MCF 10A (cell line): ENCODE measurements at regions of chr3 and their contacts with region 1.

Region 1: DNA sequence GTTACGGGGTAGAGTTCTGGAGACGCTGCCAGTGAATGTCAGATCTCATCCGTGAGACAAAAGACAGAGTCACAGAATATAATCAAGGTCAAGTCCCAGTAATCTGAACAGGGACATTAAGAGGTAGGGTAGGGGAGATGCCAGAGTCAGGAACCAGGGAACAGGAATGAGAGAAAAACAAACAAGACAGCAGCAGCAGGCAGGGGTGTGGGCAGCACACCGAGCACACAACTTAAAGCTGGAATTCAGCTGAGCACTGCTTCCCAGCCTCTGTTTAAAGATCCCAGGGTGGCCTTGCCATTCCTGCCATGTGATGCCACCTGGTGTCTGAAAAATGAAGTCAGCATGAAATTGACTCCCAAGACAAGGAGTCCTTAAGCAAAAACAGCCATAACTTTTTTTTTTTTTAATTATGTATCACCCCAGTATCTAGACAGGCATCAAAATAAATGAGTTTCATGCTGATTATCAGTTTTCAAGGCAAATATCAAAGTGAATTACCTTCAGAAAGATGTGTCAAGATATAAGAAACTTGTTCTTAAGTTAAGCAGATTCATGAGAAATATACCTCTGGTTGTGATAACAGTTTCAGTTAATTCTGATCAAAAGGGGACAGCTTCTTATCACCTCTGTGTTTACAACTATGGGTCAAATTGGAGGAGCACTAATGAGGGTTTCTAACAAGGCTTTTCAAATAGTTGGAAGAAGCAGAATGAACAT is 203.7 kb downstream of the SLC9A9 start:
- DNase-seq: peak; percentile 85
- H3K4me3 Mint-ChIP-seq: no peak overlapping the region
- H3K27ac Mint-ChIP-seq: peak overlapping the region; percentile 81
- H3K4me1 Mint-ChIP-seq: peaks cover 6% of the 10 kb centered on the region
- H3K27me3 Mint-ChIP-seq: no peaks in the 10 kb centered on the region
- CTCF ChIP-seq: peak; percentile 69

Region 2: DNA sequence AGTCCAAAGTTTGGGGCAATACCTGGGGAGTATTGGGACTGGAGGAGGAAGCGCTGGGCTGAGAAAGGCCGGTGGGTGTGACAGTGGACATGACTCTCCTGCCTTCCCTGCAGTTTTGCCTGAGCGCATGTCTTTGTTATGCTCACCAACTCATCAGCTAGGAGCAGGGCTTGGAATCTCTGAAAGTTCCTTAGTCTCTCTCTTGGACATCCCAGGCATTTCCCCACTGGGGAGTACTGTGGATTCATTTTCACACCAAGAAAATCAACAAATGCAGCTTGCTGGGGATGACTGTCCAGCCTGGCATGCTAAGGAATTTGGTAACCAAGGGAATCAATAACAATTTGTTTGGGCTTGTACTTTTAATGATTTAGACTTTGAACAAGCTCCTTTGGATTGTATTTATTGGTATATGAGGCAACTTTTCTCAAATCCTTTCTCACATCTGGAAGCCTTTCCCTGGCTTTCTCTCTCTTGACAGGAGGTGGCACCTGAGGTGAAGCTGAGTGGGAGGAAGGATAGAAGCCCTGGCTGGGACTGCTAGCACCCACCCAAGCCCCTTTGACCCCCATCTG is 573.5 kb before region 1 on chr3:
- CTCF ChIA-PET with region 1: interaction called, 30 read pairs
- POLR2A ChIA-PET with region 1: interaction called, 4 read pairs
- intact Hi-C with region 1: loop called (anchors 2 kb)
- DNase-seq: no peak
- H3K4me3 Mint-ChIP-seq: no peak overlapping the region
- H3K27ac Mint-ChIP-seq: no peak overlapping the region
- H3K4me1 Mint-ChIP-seq: no peaks in the 10 kb centered on the region
- H3K27me3 Mint-ChIP-seq: no peaks in the 10 kb centered on the region
- CTCF ChIP-seq: no peak

Region 3: DNA sequence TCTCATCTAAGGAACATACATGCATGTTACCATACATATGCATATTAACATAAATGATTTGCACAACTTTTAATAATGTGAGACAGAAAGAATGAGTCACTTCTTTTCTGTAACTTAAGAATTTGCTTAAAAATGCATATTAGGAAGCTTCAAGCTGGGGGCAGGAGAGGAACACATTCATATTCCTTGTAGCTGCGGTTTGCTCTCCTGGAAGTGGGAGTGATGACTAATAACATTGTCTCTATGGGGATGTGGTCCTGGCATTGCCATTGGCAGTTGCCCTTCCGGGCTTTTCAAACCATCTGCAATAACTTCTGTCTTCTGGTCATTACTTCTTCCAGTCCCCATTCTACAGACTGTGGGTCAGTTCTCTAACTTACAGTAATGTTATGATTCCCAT is 509.4 kb before region 1 on chr3:
- CTCF ChIA-PET with region 1: interaction called, 6 read pairs
- POLR2A ChIA-PET with region 1: interaction called, 4 read pairs
- intact Hi-C with region 1: loop called (anchors 1 kb)
- DNase-seq: peak; percentile 95
- H3K4me3 Mint-ChIP-seq: no peak overlapping the region
- H3K27ac Mint-ChIP-seq: no peak overlapping the region
- H3K4me1 Mint-ChIP-seq: peaks cover 13% of the 10 kb centered on the region
- H3K27me3 Mint-ChIP-seq: no peaks in the 10 kb centered on the region
- CTCF ChIP-seq: no peak

Region 4: DNA sequence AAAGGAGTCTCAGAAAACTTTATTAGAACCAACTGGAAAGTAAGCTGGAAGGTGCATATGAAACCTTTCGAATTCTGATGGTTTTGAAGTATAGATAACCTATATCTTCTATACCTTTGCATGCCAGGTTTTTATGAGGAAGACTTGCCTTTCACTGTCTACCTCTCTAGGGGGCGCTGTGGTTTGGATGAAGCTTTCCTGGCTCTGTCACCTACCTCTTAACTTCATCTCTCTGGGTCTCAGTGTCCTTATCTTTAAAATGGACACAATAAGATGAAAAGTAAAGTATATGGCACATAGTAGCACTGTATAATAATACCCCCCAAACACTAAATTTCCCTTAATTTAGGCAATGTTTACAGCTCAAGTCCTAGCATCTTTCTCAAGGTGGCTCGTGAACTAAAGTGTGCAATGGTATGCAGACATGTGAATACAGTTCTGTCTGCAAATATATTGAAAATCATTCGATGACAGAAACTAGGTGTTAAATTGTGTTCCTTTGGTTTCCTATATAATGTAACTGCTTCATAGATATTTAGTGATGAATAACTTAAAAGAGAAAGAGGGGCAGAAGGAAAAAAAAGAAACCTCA is 210.6 kb before region 1 on chr3:
- CTCF ChIA-PET with region 1: interaction called, 4 read pairs
- POLR2A ChIA-PET with region 1: interaction called, 3 read pairs
- intact Hi-C with region 1: loop called (anchors 5 kb)
- DNase-seq: peak; percentile 36
- H3K4me3 Mint-ChIP-seq: no peak overlapping the region
- H3K27ac Mint-ChIP-seq: no peak overlapping the region
- H3K4me1 Mint-ChIP-seq: peaks cover 11% of the 10 kb centered on the region
- H3K27me3 Mint-ChIP-seq: no peaks in the 10 kb centered on the region
- CTCF ChIP-seq: peak; percentile 30

Region 5: GRCh38 chr3:143495527-143495926 is 149.0 kb before region 1 on chr3:
- CTCF ChIA-PET with region 1: no interaction called
- POLR2A ChIA-PET with region 1: no interaction called
- intact Hi-C with region 1: no loop called
- DNase-seq: no peak
- H3K4me3 Mint-ChIP-seq: no peak overlapping the region
- H3K27ac Mint-ChIP-seq: no peak overlapping the region
- H3K4me1 Mint-ChIP-seq: no peaks in the 10 kb centered on the region
- H3K27me3 Mint-ChIP-seq: no peaks in the 10 kb centered on the region
- CTCF ChIP-seq: no peak

Region 6: DNA sequence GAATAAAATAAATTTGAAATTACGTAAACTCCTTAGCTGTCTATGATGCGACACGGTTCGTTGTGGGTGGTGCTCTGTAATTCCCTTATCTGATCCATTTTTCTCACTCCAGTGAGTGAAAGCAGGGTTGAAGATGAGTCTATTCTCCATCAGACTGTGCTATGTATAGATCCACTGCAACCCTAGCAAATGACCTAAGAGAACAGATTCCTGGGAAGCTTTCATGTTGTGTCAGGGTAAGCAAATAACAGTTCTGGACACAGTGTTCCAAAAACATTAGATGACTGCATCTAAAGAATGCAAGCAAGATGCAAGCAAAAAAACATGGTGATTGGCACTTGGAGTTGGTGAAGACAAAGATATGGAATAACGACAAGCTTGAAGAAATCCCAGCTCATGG is 35.6 kb before region 1 on chr3:
- CTCF ChIA-PET with region 1: interaction called, 12 read pairs
- POLR2A ChIA-PET with region 1: interaction called, 12 read pairs
- intact Hi-C with region 1: no loop called
- DNase-seq: peak; percentile 83
- H3K4me3 Mint-ChIP-seq: peak overlapping the region; percentile 30
- H3K27ac Mint-ChIP-seq: peak overlapping the region; percentile 96
- H3K4me1 Mint-ChIP-seq: peaks cover 47% of the 10 kb centered on the region
- H3K27me3 Mint-ChIP-seq: no peaks in the 10 kb centered on the region
- CTCF ChIP-seq: no peak

Region 7: DNA sequence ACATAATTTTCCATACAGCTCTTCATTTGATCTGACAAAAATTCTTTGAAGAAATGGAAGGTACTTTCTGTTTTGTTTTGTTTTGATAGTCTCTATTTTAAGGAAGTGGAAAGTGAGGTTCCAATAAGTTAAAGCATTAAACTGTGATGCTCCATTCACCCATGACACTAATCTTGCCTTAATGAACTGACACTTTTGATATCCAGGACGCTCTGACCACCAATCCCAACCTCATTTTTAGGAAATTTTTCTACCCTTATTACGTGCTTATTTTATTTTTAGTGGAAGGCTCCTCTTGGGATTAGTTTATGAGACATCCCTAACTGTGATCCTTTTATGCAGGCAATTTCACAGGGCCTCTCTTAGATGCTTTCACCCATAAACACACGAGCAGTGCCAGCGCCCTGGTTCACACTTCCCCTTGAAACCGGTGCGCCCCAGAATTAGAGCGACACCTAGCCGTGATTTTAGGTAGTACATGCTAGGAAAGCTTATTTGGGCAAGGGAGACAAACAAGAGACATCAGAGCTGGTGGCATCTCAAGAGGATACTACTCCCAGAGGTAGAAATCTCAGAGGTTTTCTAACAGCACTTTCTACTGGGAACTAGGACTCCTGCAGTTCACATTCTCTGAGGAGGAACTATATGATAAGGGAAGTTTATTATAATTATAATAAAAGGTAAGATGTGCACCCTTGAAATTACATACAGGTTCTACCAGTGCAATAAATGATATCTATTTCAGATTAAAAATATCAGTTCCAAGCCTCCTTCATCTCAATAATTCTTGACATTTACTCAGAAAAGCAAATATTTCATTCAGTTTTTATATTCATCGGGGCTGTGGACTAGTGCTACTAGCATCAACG is 29.8 kb after region 1 on chr3:
- CTCF ChIA-PET with region 1: interaction called, 12 read pairs
- POLR2A ChIA-PET with region 1: interaction called, 3 read pairs
- intact Hi-C with region 1: no loop called
- DNase-seq: peak; percentile 82
- H3K4me3 Mint-ChIP-seq: no peak overlapping the region
- H3K27ac Mint-ChIP-seq: peak overlapping the region; percentile 6
- H3K4me1 Mint-ChIP-seq: peaks cover 6% of the 10 kb centered on the region
- H3K27me3 Mint-ChIP-seq: no peaks in the 10 kb centered on the region
- CTCF ChIP-seq: peak; percentile 90